Transverse colon (tissue), 4 donors: ENCODE measurements at regions of chr3 and their contacts with region 1.

Region 1: DNA sequence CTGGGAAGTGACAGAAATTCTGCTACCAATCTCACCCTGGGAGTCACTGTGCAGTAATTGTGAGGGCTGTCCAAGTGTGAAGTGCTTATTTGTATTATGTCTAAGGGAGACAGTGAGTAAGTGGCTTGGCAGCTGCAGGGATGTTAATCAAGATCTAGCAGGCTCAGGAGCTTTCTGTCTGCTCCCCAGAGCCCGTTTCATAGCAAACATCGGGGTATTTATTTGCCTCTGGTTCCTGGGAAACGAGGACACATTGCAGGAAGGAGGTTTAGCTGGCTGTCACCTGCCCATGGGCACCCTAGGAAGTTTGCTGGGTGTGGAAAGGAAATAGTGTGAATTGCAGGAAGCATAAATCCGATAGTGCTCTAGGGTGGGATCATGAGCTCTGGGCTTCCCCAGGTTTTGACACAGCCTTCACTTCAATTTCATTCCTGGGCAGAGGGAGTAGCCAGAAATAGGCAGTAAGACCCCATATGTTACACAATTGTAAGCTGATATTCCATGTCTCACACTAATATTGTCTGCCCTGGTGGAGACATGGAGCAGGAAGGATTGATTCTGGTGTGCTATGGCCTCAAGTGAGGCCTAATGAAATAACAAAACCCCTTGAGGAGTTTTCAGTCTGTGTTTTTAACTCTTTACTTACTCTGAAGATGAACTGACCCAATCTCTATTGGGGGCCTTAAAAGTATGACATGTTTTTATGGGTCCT is 74.1 kb upstream of the MITF start:
- DNase-seq: no peak
- H3K4me3 ChIP-seq: no peak overlapping the region
- H3K27ac ChIP-seq: no peak overlapping the region
- H3K4me1 ChIP-seq: no peaks in the 10 kb centered on the region
- H3K27me3 ChIP-seq: peaks cover 4% of the 10 kb centered on the region
- CTCF ChIP-seq: no peak
- EP300 ChIP-seq: no peak
- POLR2A ChIP-seq: no peak

Region 2: GRCh38 chr3:69174871-69175737 is 490.1 kb before region 1 on chr3:
- in situ Hi-C with region 1: loop called in 2 of 4 experiments (anchors 25 kb)
- intact Hi-C with region 1: loop called (anchors 5 kb)
- DNase-seq: no peak
- H3K4me3 ChIP-seq: no peak overlapping the region
- H3K27ac ChIP-seq: no peak overlapping the region
- H3K4me1 ChIP-seq: peaks cover 4 to 19% (median 11%) of the 10 kb centered on the region in 4 donors
- H3K27me3 ChIP-seq: no peaks in the 10 kb centered on the region
- CTCF ChIP-seq: no peak
- EP300 ChIP-seq: no peak
- POLR2A ChIP-seq: no peak

Region 3: GRCh38 chr3:69439643-69440270 is 225.4 kb before region 1 on chr3:
- in situ Hi-C with region 1: loop called (anchors 10 to 25 kb)
- intact Hi-C with region 1: no loop called
- DNase-seq: no peak
- H3K4me3 ChIP-seq: no peak overlapping the region
- H3K27ac ChIP-seq: no peak overlapping the region
- H3K4me1 ChIP-seq: peaks cover 0 to 5% (median 0%) of the 10 kb centered on the region in 4 donors
- H3K27me3 ChIP-seq: no peaks in the 10 kb centered on the region
- CTCF ChIP-seq: peak in 4 of 5 experiments; percentile 29 to 45 (median 34)
- EP300 ChIP-seq: no peak
- POLR2A ChIP-seq: no peak